H1 (cell line): ENCODE measurements at regions of chr11 and their contacts with region 1.

Region 1: DNA sequence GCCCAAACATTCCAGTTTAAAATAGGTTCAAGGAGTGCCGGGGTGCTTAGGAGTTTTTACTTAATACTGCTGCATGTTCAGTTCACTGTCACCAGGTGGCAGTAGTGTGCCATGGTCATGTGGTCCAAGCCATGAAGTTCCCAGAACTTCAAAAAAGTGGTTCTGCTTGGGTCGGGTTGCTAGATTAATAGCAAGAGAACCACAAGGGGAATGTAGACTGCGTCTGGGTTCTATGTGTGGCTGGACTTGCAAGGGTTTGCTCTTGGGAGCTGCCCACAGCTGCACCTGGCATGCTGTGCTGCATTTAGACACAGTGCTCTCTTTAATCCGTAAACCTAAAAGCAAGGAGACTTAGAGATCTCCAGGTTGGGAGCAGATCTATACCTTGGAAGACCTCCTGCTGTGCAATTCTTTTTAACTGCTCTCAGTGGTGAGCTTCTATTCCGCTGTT is 6.5 kb upstream of the SPON1 start:
- DNase-seq: peak in 1 of 2 experiments; percentile 63
- H3K4me3 ChIP-seq: no peak overlapping the region
- H3K27ac ChIP-seq: no peak overlapping the region
- H3K4me1 ChIP-seq: peaks cover 0 to 7% (median 4%) of the 10 kb centered on the region in 4 experiments; a peak in 6 of 7 replicates
- H3K27me3 ChIP-seq: peaks cover under 1 to 15% (median 7%) of the 10 kb centered on the region in 4 experiments
- CTCF ChIP-seq: peak; percentile 59 to 82 (median 81)
- EP300 ChIP-seq: no peak
- POLR2A ChIP-seq: no peak
- RAD21 ChIP-seq: peak; percentile 91 to 93

Region 2: DNA sequence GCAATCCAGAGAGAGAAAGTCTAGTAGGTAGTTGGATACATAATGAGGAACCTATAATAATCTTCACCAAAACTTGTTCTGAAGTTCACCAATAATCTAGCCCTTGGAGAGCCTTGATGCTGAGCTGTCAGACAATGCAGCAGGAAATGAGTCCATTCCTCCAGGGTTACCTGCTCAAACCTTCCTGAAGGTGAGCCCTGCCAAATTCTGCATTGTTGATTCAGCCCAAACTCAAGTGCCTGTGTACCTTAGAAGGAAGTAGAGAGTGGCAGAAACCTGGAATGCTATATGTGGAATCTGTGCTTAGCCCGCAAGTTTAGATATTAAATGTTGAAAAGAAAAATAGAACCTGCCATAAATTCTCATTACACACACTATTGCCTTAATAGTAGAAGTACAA is 70.9 kb before region 1 on chr11:
- CTCF ChIA-PET with region 1: interaction called, 12 read pairs
- POLR2A ChIA-PET with region 1: no interaction called
- DNase-seq: no peak
- H3K4me3 ChIP-seq: no peak overlapping the region
- H3K27ac ChIP-seq: no peak overlapping the region
- H3K4me1 ChIP-seq: no peaks in the 10 kb centered on the region
- H3K27me3 ChIP-seq: no peaks in the 10 kb centered on the region
- CTCF ChIP-seq: no peak
- EP300 ChIP-seq: no peak
- POLR2A ChIP-seq: no peak
- RAD21 ChIP-seq: no peak

Region 3: GRCh38 chr11:13970986-13971385 is 15.0 kb after region 1 on chr11:
- CTCF ChIA-PET with region 1: interaction called, 101 read pairs
- POLR2A ChIA-PET with region 1: no interaction called
- DNase-seq: peak in 1 of 2 experiments; percentile 53
- H3K4me3 ChIP-seq: no peak overlapping the region
- H3K27ac ChIP-seq: no peak overlapping the region
- H3K4me1 ChIP-seq: peaks cover 3 to 7% (median 5%) of the 10 kb centered on the region in 4 experiments; a peak in 5 of 7 replicates
- H3K27me3 ChIP-seq: peaks cover 0 to 6% (median 0%) of the 10 kb centered on the region in 4 experiments; a peak in 2 of 7 replicates
- CTCF ChIP-seq: peak; percentile 68 to 73 (median 73)
- EP300 ChIP-seq: no peak
- POLR2A ChIP-seq: no peak
- RAD21 ChIP-seq: peak; percentile 73 to 75

Region 4: DNA sequence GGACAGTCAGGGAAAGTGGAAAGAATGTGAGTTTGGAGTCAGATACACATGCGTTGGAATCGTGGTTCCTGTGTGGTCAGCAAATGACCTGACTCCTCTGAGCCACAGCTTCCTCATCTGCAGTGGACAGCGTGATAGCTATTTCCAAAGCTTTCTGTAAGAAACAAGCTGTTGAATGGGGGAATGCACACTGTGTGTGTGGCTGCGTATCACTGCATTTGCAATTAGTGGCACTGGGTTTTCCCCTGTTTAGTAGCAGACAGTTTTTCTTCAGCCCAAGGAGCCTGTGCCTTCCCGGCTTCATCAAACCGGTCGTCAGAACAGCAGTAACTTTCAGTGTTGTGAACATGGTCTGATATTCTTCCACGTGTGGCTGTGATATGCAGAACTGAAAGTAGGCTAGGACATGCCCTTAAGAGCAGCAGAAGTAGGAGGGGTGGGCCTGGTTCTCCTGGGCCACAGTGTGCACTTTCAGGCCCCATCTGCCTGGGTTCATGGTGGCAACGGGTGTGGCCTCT is 281.5 kb after region 1 on chr11:
- CTCF ChIA-PET with region 1: interaction called, 13 read pairs
- POLR2A ChIA-PET with region 1: no interaction called
- DNase-seq: no peak
- H3K4me3 ChIP-seq: no peak overlapping the region
- H3K27ac ChIP-seq: no peak overlapping the region
- H3K4me1 ChIP-seq: peaks cover 0 to under 1% (median 0%) of the 10 kb centered on the region in 4 experiments; a peak in 1 of 7 replicates
- H3K27me3 ChIP-seq: peaks cover 0 to 3% (median 0%) of the 10 kb centered on the region in 4 experiments; a peak in 1 of 7 replicates
- CTCF ChIP-seq: no peak
- EP300 ChIP-seq: no peak
- POLR2A ChIP-seq: no peak
- RAD21 ChIP-seq: no peak

Region 5: DNA sequence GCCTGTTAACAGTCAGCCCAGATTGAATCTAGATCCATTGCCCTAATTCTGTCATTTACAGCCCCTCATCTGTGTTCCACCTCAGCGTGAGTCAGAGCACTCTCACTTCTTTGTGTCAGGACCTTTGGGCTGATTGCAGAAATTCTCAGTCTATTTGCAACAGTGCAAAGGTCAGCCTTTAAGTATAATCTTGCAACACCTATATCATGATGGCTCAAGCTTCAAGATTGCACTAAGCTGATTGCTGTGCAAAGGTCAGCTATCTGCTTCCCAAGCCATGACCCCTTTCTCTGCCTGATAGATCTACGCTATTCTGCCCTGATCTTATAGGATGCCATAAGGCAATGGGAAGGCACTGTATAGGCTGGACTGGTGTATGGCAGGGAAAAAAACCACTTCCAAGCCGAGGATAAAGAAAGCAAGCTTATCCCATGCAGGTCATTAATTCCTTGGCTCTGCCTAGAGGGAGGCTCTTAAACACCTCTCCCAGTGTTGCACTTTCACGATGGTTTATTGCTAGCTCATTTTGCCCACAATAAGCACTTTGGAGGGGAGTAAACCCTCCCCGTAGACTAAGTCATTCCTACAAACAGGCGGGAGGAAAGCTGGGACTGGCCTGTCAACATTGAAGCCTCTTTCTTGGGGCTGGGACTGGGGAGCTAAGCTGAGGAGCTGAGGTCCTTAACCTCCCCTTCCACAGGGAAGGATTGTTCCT is 302.4 kb after region 1 on chr11:
- CTCF ChIA-PET with region 1: interaction called, 43 read pairs
- POLR2A ChIA-PET with region 1: no interaction called
- DNase-seq: peak in 1 of 2 experiments; percentile 40
- H3K4me3 ChIP-seq: no peak overlapping the region
- H3K27ac ChIP-seq: no peak overlapping the region
- H3K4me1 ChIP-seq: no peaks in the 10 kb centered on the region; a peak in 1 of 7 replicates
- H3K27me3 ChIP-seq: no peaks in the 10 kb centered on the region
- CTCF ChIP-seq: no peak
- EP300 ChIP-seq: no peak
- POLR2A ChIP-seq: no peak
- RAD21 ChIP-seq: no peak